ENCODE measurements at regions of chr21 and their contacts with region 1.

Region 1: DNA sequence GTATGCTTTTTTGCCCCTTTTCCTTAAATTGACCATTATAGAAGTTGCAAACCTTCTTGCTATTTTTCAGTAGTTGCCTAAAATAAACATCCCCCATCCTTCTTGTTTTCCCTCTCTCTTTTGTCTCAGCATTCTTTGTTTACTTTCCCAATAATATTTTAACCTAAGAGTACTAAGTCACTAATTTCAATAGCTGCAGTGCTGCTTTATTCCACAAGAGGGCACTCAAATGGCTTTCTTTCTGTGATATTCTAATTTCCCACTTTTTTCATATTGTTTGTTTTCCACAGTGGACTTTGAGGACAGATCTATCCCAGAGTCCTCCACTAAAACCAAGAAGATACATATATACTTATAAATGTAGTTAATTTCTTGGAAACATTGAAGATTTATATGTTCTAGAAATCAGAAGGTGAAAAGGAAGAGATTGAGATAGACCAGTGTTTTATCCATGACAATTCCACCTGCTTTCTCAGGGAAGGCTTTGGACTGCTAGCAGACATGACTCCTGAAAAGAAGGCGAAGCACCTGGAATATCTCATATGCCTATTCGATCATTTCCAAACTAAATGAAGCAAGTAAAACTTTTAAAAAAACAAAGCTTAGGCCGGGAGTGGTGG is 104.8 kb upstream of the GRIK1 start:
- DNase-seq: peak; percentile 8
- ATAC-seq: no peak
- H3K4me3 ChIP-seq: no peak overlapping the region
- H3K4me3 Mint-ChIP-seq: no peak overlapping the region
- H3K27ac ChIP-seq: no peak overlapping the region
- H3K27ac Mint-ChIP-seq: no peak overlapping the region
- H3K4me1 ChIP-seq: no peaks in the 10 kb centered on the region
- H3K4me1 Mint-ChIP-seq: no peaks in the 10 kb centered on the region
- H3K27me3 ChIP-seq: no peaks in the 10 kb centered on the region
- H3K27me3 Mint-ChIP-seq: no peaks in the 10 kb centered on the region
- CTCF ChIP-seq: peak; percentile 94

Region 2: DNA sequence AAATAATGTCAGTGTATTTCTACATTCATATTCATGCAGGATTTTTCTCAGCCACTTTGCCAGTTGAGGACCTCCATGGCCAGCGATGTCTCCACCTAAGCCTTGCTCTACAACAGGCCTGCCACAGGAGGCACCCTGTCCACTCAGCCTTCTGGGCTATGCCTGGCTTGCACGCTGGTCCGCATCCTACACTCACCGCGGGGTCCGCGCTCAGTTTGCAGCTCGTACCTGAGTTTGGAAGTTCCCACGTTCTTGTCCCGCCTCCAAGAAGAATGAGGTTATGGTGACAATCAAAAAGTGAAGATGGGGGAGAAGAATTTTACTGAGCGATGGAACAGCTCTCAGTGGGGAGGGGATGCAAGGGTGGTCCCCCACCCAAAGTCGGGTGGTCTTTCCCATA is 11.1 kb before region 1 on chr21:
- CTCF ChIA-PET with region 1: interaction called, 12 read pairs
- POLR2A ChIA-PET with region 1: no interaction called
- intact Hi-C with region 1: no loop called
- DNase-seq: no peak
- ATAC-seq: no peak
- H3K4me3 ChIP-seq: no peak overlapping the region
- H3K4me3 Mint-ChIP-seq: no peak overlapping the region
- H3K27ac ChIP-seq: no peak overlapping the region
- H3K27ac Mint-ChIP-seq: no peak overlapping the region
- H3K4me1 ChIP-seq: no peaks in the 10 kb centered on the region
- H3K4me1 Mint-ChIP-seq: no peaks in the 10 kb centered on the region
- H3K27me3 ChIP-seq: no peaks in the 10 kb centered on the region
- H3K27me3 Mint-ChIP-seq: no peaks in the 10 kb centered on the region
- CTCF ChIP-seq: no peak

Measured in B cell (primary cell).